Adrenal gland (tissue), 19 donors: ENCODE measurements at regions of chr9 and their contacts with region 1.

Region 1: GRCh38 chr9:134704498-134704897 is 62.9 kb downstream of the COL5A1 start:
- DNase-seq: no peak
- H3K4me3 ChIP-seq: no peak overlapping the region
- H3K27ac ChIP-seq: no peak overlapping the region
- H3K4me1 ChIP-seq: peaks cover 0 to 12% of the 10 kb centered on the region in 2 donors
- H3K27me3 ChIP-seq: no peaks in the 10 kb centered on the region
- CTCF ChIP-seq: no peak
- POLR2A ChIP-seq: no peak

Region 2: DNA sequence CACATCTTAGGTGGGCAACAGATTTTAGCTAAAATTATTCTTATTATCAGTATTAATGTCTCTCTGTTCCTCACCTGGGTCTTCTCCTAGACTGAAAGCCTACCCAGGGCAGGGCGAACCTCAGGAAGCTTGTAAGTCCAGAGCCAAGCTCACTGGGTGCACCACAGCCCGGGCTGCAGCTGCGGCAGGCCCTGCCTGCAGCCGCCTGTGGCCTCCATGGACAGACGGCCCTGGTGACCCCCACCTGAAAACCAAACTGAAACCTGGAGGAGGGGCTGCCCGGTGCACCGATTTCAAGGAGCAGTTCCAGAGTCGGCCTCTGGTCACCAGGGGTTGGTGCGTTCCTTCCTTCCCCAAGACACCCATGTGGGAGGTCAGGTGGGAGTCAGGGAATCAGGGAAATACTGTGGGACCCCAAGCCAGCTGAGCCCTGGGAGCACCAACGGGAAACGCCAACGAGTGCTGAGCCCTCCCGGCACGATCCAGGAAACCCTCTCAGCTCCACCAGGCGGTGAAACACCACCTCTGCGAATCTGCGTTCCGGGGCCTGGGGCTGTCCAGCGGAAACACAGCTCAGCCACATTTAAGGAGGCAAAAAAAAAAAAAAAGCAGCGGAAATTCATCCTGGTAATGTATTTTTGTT is 706.5 kb after region 1 on chr9:
- intact Hi-C with region 1: loop called in 1 of 2 experiments (anchors 5 kb)
- DNase-seq: no peak
- H3K4me3 ChIP-seq: no peak overlapping the region
- H3K27ac ChIP-seq: no peak overlapping the region
- H3K4me1 ChIP-seq: no peaks in the 10 kb centered on the region
- H3K27me3 ChIP-seq: peaks cover 6% of the 10 kb centered on the region
- CTCF ChIP-seq: no peak
- POLR2A ChIP-seq: no peak